ENCODE measurements at regions of chr16 and their contacts with region 1.

Region 1: GRCh38 chr16:75471723-75472633 is 7.5 kb upstream of the TMEM170A start:
- DNase-seq: no peak
- ATAC-seq: peak; percentile 97
- H3K4me3 ChIP-seq: no peak overlapping the region
- H3K27ac ChIP-seq: no peak overlapping the region
- H3K4me1 ChIP-seq: peaks cover 3 to 10% of the 10 kb centered on the region in 2 experiments; a peak in 2 of 4 replicates
- H3K27me3 ChIP-seq: no peaks in the 10 kb centered on the region
- CTCF ChIP-seq: peak; percentile 70 to 94 (median 77)
- POLR2A ChIP-seq: no peak
- RAD21 ChIP-seq: peak; percentile 97

Region 2: DNA sequence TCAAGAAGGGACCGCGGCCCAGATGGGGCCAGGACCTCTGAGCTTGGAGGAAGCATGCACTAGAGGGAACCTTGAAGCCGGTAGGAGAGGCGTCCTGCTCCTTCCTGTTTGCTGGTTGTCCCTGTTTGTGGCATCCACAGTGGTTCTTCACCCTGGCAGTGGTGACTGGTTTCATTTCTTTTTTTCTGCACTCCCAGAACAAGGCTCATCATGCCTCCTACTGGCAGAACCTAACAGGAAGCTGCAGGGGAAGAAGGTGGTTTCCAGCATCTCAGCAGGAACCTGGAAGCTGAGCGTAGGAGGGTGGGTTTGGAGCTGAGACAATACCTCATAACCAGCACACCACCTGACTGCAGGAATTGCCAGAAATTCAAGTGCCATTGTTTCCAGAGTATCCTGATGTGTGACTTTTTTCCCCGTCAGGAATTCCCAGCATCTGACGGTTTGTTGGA is 78.3 kb after region 1 on chr16:
- CTCF ChIA-PET with region 1: interaction called, 4 read pairs
- POLR2A ChIA-PET with region 1: no interaction called
- RAD21 ChIA-PET with region 1: no interaction called
- intact Hi-C with region 1: loop called (anchors 1 kb)
- DNase-seq: no peak
- ATAC-seq: peak; percentile 38
- H3K4me3 ChIP-seq: no peak overlapping the region
- H3K27ac ChIP-seq: no peak overlapping the region
- H3K4me1 ChIP-seq: peaks cover 2 to 11% of the 10 kb centered on the region in 2 experiments; a peak in 2 of 4 replicates
- H3K27me3 ChIP-seq: no peaks in the 10 kb centered on the region
- CTCF ChIP-seq: peak; percentile 55 to 65 (median 58); a peak in 5 of 6 replicates
- POLR2A ChIP-seq: no peak
- RAD21 ChIP-seq: peak; percentile 73

Region 3: DNA sequence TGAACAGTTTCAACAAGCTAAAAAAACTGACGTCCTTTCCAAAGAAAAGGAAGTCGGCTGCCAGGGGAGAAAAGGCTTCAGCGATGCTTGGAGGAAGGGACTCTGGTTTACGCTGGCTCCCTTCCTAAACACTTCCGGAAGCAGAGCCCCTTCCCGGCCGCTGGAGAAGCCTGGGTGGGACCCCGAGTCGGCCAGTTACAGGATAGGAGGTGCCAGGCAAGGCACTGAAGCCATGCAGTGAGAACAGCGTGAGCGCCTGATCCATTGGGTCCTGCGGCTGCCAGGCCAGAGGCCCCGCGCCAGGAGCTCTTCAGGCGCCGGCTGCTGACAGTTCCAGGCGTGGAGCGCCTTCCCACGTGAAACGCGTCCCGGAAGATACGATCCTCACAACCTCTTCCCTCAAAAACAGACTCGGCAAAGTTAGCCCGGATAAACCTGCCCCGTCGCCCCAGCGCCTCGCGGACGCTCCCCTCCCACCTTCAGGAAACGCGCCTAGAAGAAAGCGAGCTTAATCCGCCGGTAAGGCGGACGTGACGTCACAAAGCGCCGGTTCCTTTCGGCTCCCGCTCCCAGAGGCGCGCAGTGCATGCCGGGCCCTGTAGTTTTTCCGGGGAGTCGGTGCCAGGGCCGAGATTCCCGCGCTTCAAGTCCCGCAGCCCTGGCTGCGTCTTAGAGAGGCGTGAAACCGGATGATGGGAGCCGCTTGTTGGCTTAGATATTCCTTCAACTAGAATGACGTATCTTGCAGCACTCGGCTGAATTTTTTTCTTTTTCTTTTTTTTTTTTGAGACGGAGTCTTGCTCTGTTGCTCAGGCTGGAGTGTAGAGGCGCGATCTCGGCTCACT is 151.0 kb after region 1 on chr16 and contains the start of gene ADAT1:
- CTCF ChIA-PET with region 1: no interaction called
- POLR2A ChIA-PET with region 1: interaction called, 3 read pairs
- RAD21 ChIA-PET with region 1: no interaction called
- intact Hi-C with region 1: loop called (anchors 5 kb)
- DNase-seq: peak; percentile 96
- ATAC-seq: peak; percentile 95
- H3K4me3 ChIP-seq: peak within 1 kb of the TSS; percentile 75 to 79
- H3K27ac ChIP-seq: peak within 1 kb of the TSS; percentile 86
- H3K4me1 ChIP-seq: peaks cover 8 to 19% of the 10 kb centered on the region in 2 experiments
- H3K27me3 ChIP-seq: no peaks in the 10 kb centered on the region
- CTCF ChIP-seq: no peak
- POLR2A ChIP-seq: peak; percentile 78
- RAD21 ChIP-seq: no peak
- total RNA-seq, gene ADAT1: 44.2 TPM

Region 4: DNA sequence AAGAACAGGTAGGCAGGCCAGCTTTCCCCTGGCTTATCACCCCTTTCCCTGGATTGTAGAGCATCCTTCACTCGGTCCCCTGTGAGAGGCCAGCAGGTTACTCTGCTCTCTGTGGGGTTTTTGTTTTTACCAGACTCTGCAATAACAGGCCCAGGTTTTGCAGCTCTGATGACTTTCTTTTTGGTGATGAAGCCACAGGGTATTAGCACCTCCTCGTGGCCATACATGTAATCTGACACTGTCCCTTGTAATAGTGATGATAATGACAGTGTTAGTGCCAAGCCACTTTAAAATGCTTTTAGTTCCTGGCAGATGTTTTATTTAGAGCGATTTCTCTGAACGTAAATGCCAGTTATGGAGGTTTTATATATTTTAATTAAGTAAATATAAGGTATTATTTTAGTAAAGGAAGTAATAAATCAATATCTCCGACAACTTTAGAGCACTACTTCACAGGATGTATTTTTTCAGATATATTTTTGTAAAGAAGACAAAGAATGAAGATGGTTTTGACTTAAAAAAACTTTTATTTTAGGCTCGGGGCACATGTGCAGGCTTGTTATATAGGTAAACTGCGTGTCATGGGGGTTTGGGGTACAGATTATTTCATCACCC is 292.3 kb after region 1 on chr16:
- CTCF ChIA-PET with region 1: interaction called, 3 read pairs
- POLR2A ChIA-PET with region 1: no interaction called
- RAD21 ChIA-PET with region 1: no interaction called
- intact Hi-C with region 1: loop called (anchors 2 kb)
- DNase-seq: peak; percentile 60
- ATAC-seq: peak; percentile 98
- H3K4me3 ChIP-seq: no peak overlapping the region
- H3K27ac ChIP-seq: no peak overlapping the region
- H3K4me1 ChIP-seq: no peaks in the 10 kb centered on the region
- H3K27me3 ChIP-seq: peaks cover 24% of the 10 kb centered on the region
- CTCF ChIP-seq: peak; percentile 82 to 84 (median 84); a peak in 5 of 6 replicates
- POLR2A ChIP-seq: no peak
- RAD21 ChIP-seq: peak; percentile 92

Measured in HCT116 (cell line).